Activated B cell treated with CpG ODN at 0.5 μM for 24 hours (primary cell): ENCODE measurements at regions of chr4 and their contacts with region 1.

Region 1: DNA sequence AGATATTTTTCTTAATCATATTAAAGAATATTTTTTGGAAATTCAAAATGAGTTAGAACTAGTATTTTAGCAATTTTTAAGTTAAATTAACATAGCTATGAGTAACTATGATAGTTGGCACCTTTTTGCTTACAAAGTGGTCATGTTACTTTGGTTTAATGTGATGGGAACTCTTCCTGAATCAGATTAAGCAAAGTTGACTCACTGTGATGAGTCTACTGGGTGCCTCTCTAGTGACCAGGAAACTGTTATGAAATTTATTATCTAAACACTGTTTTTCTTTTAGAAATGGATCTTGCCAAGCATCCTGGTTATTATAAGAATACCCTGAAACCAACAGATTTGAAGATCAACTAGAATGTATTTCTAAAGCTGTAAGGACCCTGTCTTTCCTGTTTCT is 985.8 kb downstream of the TRAM1L1 start:
- DNase-seq: no peak
- ATAC-seq: no peak
- H3K4me3 Mint-ChIP-seq: no peak overlapping the region
- H3K27ac Mint-ChIP-seq: no peak overlapping the region
- H3K4me1 Mint-ChIP-seq: no peaks in the 10 kb centered on the region
- H3K27me3 Mint-ChIP-seq: no peaks in the 10 kb centered on the region
- CTCF ChIP-seq: no peak

Region 2: DNA sequence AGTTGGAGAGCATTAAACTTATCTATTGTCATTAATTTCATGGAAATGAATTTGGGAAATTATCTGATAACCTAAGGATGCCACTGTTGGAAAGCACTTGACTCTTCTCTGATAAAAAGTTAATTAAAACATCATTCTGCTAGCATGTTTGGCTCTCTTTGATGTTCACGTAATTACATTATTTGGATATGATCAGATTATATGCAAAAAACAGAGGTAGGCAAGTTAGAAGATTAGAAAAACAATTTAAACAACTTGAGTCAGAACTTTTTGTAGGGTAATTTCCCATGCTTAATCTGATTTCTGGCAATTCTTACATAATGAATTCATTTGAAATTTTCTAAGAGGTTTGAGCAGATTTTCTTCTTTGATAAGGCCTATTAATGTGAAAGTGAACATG is 102.9 kb after region 1 on chr4:
- CTCF ChIA-PET with region 1: no interaction called
- POLR2A ChIA-PET with region 1: no interaction called
- intact Hi-C with region 1: no loop called
- DNase-seq: no peak
- ATAC-seq: no peak
- H3K4me3 Mint-ChIP-seq: no peak overlapping the region
- H3K27ac Mint-ChIP-seq: no peak overlapping the region
- H3K4me1 Mint-ChIP-seq: no peaks in the 10 kb centered on the region
- H3K27me3 Mint-ChIP-seq: no peaks in the 10 kb centered on the region
- CTCF ChIP-seq: no peak

Region 3: DNA sequence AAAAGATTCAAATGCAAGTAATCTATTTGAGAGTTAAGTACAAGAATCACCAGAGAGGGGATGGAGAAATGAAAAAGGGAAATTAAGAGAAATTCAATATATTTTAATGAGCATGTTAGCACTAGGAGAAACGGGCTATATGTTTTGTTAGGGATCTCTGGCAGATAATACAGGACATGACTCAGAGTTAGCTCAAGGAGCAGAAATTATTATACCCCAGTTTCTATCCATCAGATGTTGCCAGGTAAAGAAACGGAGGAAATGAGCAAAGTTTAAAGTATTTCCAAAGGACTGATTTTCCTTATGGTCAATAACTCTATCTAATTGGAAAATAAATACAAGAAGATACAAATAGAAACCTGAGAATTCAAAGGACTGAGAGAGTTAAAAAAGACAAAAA is 118.2 kb after region 1 on chr4:
- CTCF ChIA-PET with region 1: no interaction called
- POLR2A ChIA-PET with region 1: interaction called, 10 read pairs
- intact Hi-C with region 1: no loop called
- DNase-seq: no peak
- ATAC-seq: no peak
- H3K4me3 Mint-ChIP-seq: no peak overlapping the region
- H3K27ac Mint-ChIP-seq: no peak overlapping the region
- H3K4me1 Mint-ChIP-seq: no peaks in the 10 kb centered on the region
- H3K27me3 Mint-ChIP-seq: no peaks in the 10 kb centered on the region
- CTCF ChIP-seq: no peak